Naive thymus-derived CD4-positive, alpha-beta T cell (primary cell): ENCODE measurements at regions of chr16 and their contacts with region 1.

Region 1: DNA sequence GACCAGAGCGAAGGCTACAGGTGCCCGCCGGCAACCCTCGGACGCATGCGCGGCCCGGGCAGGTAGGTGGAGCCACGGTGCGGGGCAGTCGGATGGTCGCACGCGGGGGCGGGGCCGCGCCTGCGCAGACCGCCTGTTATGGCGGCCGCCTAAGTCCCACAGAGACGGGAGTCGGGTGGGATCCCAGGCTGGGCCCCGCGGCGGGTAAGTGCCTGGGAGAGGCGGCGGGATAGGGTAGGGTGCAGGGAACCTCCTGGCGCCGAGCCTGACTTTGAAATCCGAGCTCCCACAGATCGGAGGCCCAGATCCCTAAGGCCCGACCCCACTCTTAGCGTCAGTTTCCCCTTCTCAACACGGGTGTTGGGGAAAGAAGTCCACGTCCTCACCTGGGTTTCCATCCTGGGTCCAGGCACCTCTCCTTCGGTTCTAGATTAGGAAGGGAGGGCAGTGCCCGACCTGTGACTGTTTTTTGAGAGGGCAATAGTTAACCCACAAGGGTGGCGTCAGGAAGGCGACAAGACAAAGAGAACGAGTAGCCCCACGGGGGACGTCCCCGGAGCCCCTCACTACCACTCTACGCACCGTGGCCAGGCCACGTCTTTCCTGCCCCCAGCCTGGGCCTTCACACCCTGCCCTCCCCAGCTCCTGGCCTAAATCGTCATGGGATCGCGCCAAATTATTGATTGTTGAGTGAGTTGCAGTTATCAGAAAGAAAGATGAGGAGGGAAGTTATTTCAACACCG is at the start of gene METTL22:
- DNase-seq: peak; percentile 83 to 98 (median 90)
- ATAC-seq: peak; percentile 99
- H3K4me3 ChIP-seq: peak within 1 kb of the TSS; percentile 97
- H3K4me3 Mint-ChIP-seq: peak within 1 kb of the TSS; percentile 93 to 100 (median 95)
- H3K27ac ChIP-seq: peak within 1 kb of the TSS; percentile 92
- H3K27ac Mint-ChIP-seq: peak within 1 kb of the TSS; percentile 75 to 93 (median 87)
- H3K4me1 ChIP-seq: peaks cover 7 to 10% of the 10 kb centered on the region in 2 donors
- H3K4me1 Mint-ChIP-seq: peaks cover 17 to 40% (median 26%) of the 10 kb centered on the region in 7 donors
- H3K27me3 ChIP-seq: no peaks in the 10 kb centered on the region
- H3K27me3 Mint-ChIP-seq: peaks cover 0 to 17% (median 6%) of the 10 kb centered on the region in 5 donors
- total RNA-seq, gene METTL22: 28.9 to 59.4 (median 48.9) TPM

Region 2: GRCh38 chr16:8644211-8645140 is 22.7 kb after region 1 on chr16:
- CTCF ChIA-PET with region 1: no interaction called
- POLR2A ChIA-PET with region 1: interaction called, 4 read pairs
- intact Hi-C with region 1: loop called in 1 of 2 experiments (anchors 2 kb)
- DNase-seq: peak in 6 of 9 donors; percentile 18 to 29 (median 24)
- ATAC-seq: peak; percentile 83
- H3K4me3 ChIP-seq: no peak overlapping the region
- H3K4me3 Mint-ChIP-seq: peak overlapping the region in 4 of 10 donors; percentile 8 to 56 (median 18)
- H3K27ac ChIP-seq: no peak overlapping the region
- H3K27ac Mint-ChIP-seq: peak overlapping the region; percentile 40 to 88 (median 80)
- H3K4me1 ChIP-seq: peaks cover 3 to 8% of the 10 kb centered on the region in 2 donors
- H3K4me1 Mint-ChIP-seq: peaks cover 8 to 25% (median 16%) of the 10 kb centered on the region in 7 donors
- H3K27me3 ChIP-seq: no peaks in the 10 kb centered on the region
- H3K27me3 Mint-ChIP-seq: no peaks in the 10 kb centered on the region

Region 3: GRCh38 chr16:8674413-8675022 is 52.8 kb after region 1 on chr16 and contains the start of gene ABAT:
- CTCF ChIA-PET with region 1: no interaction called
- POLR2A ChIA-PET with region 1: no interaction called
- intact Hi-C with region 1: loop called (anchors 1 to 2 kb)
- DNase-seq: peak; percentile 83 to 92 (median 87)
- ATAC-seq: peak; percentile 99
- H3K4me3 ChIP-seq: peak within 1 kb of the TSS; percentile 57
- H3K4me3 Mint-ChIP-seq: peak within 1 kb of the TSS; percentile 78 to 93 (median 88)
- H3K27ac ChIP-seq: peak within 1 kb of the TSS; percentile 70
- H3K27ac Mint-ChIP-seq: peak within 1 kb of the TSS; percentile 58 to 91 (median 78)
- H3K4me1 ChIP-seq: peaks cover 9 to 18% of the 10 kb centered on the region in 2 donors
- H3K4me1 Mint-ChIP-seq: peaks cover 6 to 22% (median 19%) of the 10 kb centered on the region in 7 donors
- H3K27me3 ChIP-seq: no peaks in the 10 kb centered on the region
- H3K27me3 Mint-ChIP-seq: peaks cover 0 to 7% (median 0%) of the 10 kb centered on the region in 5 donors
- total RNA-seq, gene ABAT: 5.4 to 11.5 (median 9.3) TPM

Region 4: GRCh38 chr16:9225611-9226316 is 604.0 kb after region 1 on chr16:
- CTCF ChIA-PET with region 1: no interaction called
- POLR2A ChIA-PET with region 1: no interaction called
- intact Hi-C with region 1: no loop called
- DNase-seq: no peak
- ATAC-seq: no peak
- H3K4me3 ChIP-seq: no peak overlapping the region
- H3K4me3 Mint-ChIP-seq: no peak overlapping the region
- H3K27ac ChIP-seq: no peak overlapping the region
- H3K27ac Mint-ChIP-seq: peak overlapping the region in 1 of 9 donors; percentile 36
- H3K4me1 ChIP-seq: no peaks in the 10 kb centered on the region
- H3K4me1 Mint-ChIP-seq: no peaks in the 10 kb centered on the region
- H3K27me3 ChIP-seq: no peaks in the 10 kb centered on the region
- H3K27me3 Mint-ChIP-seq: peaks cover 0 to 21% (median 6%) of the 10 kb centered on the region in 5 donors